Calu3 (cell line): ENCODE measurements at regions of chr7 and their contacts with region 1.

Region 1: GRCh38 chr7:114426382-114427223 is 12.0 kb downstream of the FOXP2 start:
- DNase-seq: no peak
- H3K4me3 Mint-ChIP-seq: no peak overlapping the region
- H3K27ac Mint-ChIP-seq: no peak overlapping the region
- H3K4me1 Mint-ChIP-seq: no peaks in the 10 kb centered on the region
- H3K27me3 Mint-ChIP-seq: no peaks in the 10 kb centered on the region
- CTCF ChIP-seq: peak; percentile 30

Region 2: DNA sequence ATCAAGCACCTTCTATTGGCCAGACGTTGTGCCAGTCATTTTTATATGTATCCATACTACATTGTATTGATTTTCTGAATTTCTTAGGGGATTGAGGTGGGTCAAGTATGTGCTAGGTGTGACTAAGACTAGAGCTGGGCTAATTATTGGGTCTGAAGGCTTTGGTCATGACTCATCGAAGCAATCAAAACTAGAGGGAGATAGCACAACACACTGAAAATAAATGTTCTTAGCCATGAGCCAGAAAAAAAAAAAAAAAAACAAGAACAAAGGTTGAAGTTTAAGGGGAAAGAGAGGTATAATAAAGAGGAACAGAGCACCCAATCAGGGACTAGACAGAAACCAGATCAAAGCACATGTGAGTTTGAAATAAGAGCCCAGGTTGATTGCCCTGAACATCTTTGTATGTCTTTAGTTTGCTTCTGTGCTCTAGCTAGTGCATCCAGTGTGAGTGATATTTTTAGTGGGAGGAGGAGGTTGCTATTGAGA is 183.5 kb before region 1 on chr7:
- CTCF ChIA-PET with region 1: no interaction called
- intact Hi-C with region 1: no loop called
- DNase-seq: peak; percentile 31
- H3K4me3 Mint-ChIP-seq: no peak overlapping the region
- H3K27ac Mint-ChIP-seq: peak overlapping the region; percentile 11
- H3K4me1 Mint-ChIP-seq: peaks cover 23% of the 10 kb centered on the region
- H3K27me3 Mint-ChIP-seq: no peaks in the 10 kb centered on the region
- CTCF ChIP-seq: no peak

Region 3: DNA sequence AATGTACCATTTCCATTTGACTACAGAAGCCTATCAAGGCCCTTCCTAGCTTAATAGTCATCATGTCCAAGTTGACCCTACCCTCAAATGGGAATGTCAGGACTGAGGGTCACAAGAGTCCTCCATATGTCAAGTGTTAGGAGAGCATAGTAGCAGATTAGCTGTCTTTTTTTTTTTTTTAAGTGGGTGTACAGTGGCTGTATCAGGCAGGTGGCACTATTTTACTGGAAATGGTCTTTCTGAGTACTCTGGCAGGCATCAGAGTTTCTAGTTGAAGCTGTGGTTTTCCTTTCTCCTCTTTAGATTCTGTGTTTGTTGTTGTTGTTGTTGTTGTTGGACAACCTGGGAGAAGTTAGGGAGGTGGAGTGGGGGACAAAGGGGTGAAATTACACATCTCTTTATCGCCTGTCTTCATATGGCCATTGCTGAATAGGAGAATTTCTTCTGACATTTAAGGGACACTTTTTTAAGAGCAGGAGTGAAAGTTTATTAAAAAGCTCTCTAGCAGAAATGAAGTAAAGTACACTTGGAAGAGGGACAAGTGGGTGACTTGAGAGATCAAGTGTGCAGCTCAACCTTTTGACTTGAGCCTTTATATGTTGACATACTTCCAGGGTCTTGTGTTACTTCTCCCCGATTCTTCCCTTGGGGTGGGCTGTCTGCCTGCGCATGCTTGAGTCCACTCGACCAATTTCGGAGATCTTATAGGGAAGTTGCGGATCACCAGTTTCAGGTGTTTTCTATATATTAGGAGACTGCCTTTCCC is 116.1 kb before region 1 on chr7:
- CTCF ChIA-PET with region 1: no interaction called
- intact Hi-C with region 1: no loop called
- DNase-seq: no peak
- H3K4me3 Mint-ChIP-seq: no peak overlapping the region
- H3K27ac Mint-ChIP-seq: no peak overlapping the region
- H3K4me1 Mint-ChIP-seq: no peaks in the 10 kb centered on the region
- H3K27me3 Mint-ChIP-seq: no peaks in the 10 kb centered on the region
- CTCF ChIP-seq: no peak

Region 4: DNA sequence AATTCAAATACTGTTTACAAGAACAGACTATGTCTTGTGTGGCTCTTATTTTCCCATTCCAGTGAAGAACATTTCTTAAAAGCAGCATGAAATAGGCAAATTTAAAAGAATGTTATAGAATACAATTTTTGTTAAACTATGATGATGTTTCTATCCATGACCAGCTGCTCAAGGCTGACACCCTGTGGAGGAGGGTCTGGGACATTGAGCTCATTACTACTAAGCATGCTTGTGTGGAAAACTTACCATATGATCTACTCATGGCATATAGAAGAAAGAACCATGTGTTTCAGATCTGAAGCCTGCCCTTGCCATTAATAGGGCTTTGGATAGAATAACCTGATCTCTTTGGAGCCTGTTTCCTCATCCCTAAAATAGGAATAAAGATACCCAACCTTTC is 113.0 kb after region 1 on chr7:
- CTCF ChIA-PET with region 1: interaction called, 20 read pairs
- intact Hi-C with region 1: loop called (anchors 1 kb)
- DNase-seq: peak; percentile 46
- H3K4me3 Mint-ChIP-seq: no peak overlapping the region
- H3K27ac Mint-ChIP-seq: no peak overlapping the region
- H3K4me1 Mint-ChIP-seq: no peaks in the 10 kb centered on the region
- H3K27me3 Mint-ChIP-seq: no peaks in the 10 kb centered on the region
- CTCF ChIP-seq: no peak

Region 5: GRCh38 chr7:114663502-114663901 is 236.9 kb after region 1 on chr7:
- CTCF ChIA-PET with region 1: interaction called, 16 read pairs
- intact Hi-C with region 1: loop called (anchors 1 kb)
- DNase-seq: peak; percentile 14
- H3K4me3 Mint-ChIP-seq: no peak overlapping the region
- H3K27ac Mint-ChIP-seq: no peak overlapping the region
- H3K4me1 Mint-ChIP-seq: no peaks in the 10 kb centered on the region
- H3K27me3 Mint-ChIP-seq: no peaks in the 10 kb centered on the region
- CTCF ChIP-seq: no peak